ENCODE measurements at regions of chr2 and their contacts with region 1.

Region 1: DNA sequence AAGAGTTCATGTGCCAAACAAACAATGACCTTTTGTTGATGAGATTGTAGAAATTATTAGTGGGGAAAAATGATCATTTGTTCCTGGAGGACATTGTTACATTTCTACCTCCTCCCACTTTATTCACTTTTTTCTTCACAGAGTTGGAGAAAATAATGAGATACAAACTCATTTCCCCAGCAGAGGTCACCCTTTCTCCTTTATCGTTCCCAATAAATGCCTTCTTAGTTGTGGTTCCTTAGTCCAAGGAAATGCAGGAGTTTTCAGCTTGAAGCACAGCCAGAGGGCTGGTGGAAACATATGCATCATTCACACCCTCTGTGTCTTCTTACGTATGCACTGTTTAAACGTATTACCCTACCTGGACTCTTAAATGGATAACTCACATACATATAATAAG is 108.8 kb downstream of the SLC4A3 start:
- DNase-seq: peak; percentile 91
- H3K4me3 ChIP-seq: no peak overlapping the region
- H3K27ac ChIP-seq: no peak overlapping the region
- H3K4me1 ChIP-seq: peaks cover 19% of the 10 kb centered on the region
- H3K27me3 ChIP-seq: no peaks in the 10 kb centered on the region
- CTCF ChIP-seq: peak; percentile 64

Region 2: GRCh38 chr2:219658196-219658846 is 77.9 kb before region 1 on chr2:
- CTCF ChIA-PET with region 1: no interaction called
- POLR2A ChIA-PET with region 1: no interaction called
- intact Hi-C with region 1: no loop called
- DNase-seq: no peak
- H3K4me3 ChIP-seq: no peak overlapping the region
- H3K27ac ChIP-seq: no peak overlapping the region
- H3K4me1 ChIP-seq: no peaks in the 10 kb centered on the region
- H3K27me3 ChIP-seq: peaks cover 45% of the 10 kb centered on the region
- CTCF ChIP-seq: no peak

Region 3: GRCh38 chr2:219836647-219837177 is 100.5 kb after region 1 on chr2:
- CTCF ChIA-PET with region 1: interaction called, 4 read pairs
- POLR2A ChIA-PET with region 1: no interaction called
- intact Hi-C with region 1: loop called (anchors 5 kb)
- DNase-seq: peak; percentile 50
- H3K4me3 ChIP-seq: no peak overlapping the region
- H3K27ac ChIP-seq: no peak overlapping the region
- H3K4me1 ChIP-seq: no peaks in the 10 kb centered on the region
- H3K27me3 ChIP-seq: no peaks in the 10 kb centered on the region
- CTCF ChIP-seq: peak; percentile 59

Region 4: GRCh38 chr2:219881851-219882250 is 145.6 kb after region 1 on chr2:
- CTCF ChIA-PET with region 1: no interaction called
- POLR2A ChIA-PET with region 1: no interaction called
- intact Hi-C with region 1: loop called (anchors 2 kb)
- DNase-seq: peak; percentile 64
- H3K4me3 ChIP-seq: no peak overlapping the region
- H3K27ac ChIP-seq: peak overlapping the region; percentile 35
- H3K4me1 ChIP-seq: peaks cover 13% of the 10 kb centered on the region
- H3K27me3 ChIP-seq: no peaks in the 10 kb centered on the region
- CTCF ChIP-seq: no peak

Region 5: GRCh38 chr2:219997341-219997851 is 261.2 kb after region 1 on chr2:
- CTCF ChIA-PET with region 1: no interaction called
- POLR2A ChIA-PET with region 1: interaction called, 4 read pairs
- intact Hi-C with region 1: loop called (anchors 1 kb)
- DNase-seq: peak; percentile 89
- H3K4me3 ChIP-seq: no peak overlapping the region
- H3K27ac ChIP-seq: peak overlapping the region; percentile 22
- H3K4me1 ChIP-seq: peaks cover 31% of the 10 kb centered on the region
- H3K27me3 ChIP-seq: no peaks in the 10 kb centered on the region
- CTCF ChIP-seq: peak; percentile 88

Region 6: DNA sequence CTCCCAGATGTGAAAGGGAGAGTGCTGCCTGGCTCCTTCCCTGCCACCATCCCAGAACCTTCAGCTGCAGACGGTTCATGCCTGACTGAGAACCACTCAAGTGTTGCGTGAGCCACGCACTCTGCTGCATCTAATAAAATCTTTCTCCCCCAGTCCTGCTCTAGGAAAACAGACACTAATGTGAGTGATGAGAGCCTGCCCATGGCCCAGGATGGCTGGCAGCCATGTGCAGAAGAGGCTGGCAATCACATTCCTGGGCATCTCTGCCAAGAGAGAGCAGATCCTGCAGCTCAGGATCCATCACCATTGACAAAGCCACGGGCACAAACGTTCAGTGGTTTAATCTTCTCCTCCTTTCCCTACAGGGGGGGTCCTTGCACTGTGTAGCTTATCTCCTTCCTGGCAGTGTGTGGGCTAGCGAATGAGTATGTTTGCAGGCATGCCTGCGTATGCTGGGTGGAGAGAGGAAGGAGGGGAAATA is 368.7 kb after region 1 on chr2:
- CTCF ChIA-PET with region 1: no interaction called
- POLR2A ChIA-PET with region 1: no interaction called
- intact Hi-C with region 1: loop called (anchors 10 kb)
- DNase-seq: peak; percentile 91
- H3K4me3 ChIP-seq: no peak overlapping the region
- H3K27ac ChIP-seq: no peak overlapping the region
- H3K4me1 ChIP-seq: peaks cover 19% of the 10 kb centered on the region
- H3K27me3 ChIP-seq: no peaks in the 10 kb centered on the region
- CTCF ChIP-seq: peak; percentile 61

Region 7: DNA sequence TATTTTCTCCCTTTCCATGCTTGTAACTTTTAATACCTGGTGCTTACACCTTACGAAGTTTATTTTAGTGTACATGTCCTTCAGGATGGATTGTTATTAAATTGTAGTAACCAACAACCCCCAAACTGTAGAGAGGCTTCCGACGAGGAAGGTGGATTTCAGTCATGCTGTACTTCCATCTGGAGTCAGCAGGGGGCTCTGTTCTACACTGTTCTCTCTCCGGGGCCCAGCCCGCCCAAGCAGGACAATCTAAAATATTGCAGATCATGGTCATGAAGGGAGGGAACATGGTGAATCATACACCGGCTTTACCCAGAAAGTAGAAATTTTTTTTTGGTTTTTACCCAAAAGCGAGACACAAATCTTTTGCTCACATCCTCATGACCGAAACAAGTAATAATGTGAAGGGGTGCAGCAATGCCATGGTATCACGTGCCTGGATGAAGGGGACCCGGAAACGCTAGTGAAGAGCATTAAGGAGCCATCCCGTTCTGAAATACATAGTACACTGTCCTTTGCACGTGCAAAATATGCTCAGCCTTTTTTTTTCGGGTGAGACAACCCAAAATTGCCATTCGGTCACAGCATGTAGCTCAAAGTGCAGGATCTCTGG is 951.1 kb after region 1 on chr2:
- CTCF ChIA-PET with region 1: no interaction called
- POLR2A ChIA-PET with region 1: no interaction called
- intact Hi-C with region 1: loop called (anchors 10 kb)
- DNase-seq: peak; percentile 82
- H3K4me3 ChIP-seq: no peak overlapping the region
- H3K27ac ChIP-seq: no peak overlapping the region
- H3K4me1 ChIP-seq: peaks cover 22% of the 10 kb centered on the region
- H3K27me3 ChIP-seq: no peaks in the 10 kb centered on the region
- CTCF ChIP-seq: peak; percentile 88

Measured in A673 (cell line).